GM12878 (cell line): ENCODE measurements at regions of chr5 and their contacts with region 1.

Region 1: DNA sequence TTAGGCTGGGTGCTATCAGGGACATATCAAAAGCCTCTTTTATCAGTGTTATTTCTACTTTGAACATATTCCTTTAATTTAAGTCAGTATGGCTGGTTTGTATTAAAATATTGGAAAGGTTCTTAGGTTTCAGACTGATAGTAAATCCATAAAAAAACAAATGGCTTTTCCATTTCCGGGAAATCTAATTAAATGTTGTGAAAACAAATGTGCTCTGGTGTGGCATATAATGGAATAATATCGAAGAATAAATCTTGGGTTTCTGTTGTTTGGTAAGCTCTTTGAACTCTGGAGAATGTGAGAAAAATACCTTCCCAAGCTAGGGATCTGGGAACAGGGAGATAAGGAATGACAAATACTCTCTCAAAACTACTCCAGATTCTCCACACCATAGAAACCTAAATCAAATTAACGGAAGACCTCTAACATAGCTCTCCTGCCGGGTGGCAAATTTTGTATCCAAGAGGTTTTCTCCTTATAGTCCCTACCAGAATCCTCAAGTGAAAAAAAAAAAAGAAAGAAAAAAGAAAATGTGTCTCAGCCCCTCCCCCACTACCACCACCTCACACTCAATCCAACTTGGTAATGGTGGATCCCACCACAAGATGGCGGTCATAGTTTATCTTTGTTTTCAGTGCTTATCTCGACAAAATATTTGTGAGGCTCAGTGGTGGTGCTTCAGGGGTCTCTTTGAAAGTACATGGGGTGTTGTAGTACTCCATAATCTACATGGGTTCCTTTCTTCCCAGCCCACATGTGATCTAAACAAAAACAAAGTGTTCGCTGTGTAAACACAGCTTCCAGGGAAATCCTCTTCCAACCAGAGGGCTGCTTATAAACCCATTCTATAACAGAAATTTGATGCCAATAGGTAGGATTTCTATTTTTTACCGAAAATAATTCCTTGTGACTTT is 54.6 kb upstream of the FST start:
- DNase-seq: no peak
- ATAC-seq: peak; percentile 67
- H3K4me3 ChIP-seq: no peak overlapping the region
- H3K27ac ChIP-seq: no peak overlapping the region
- H3K4me1 ChIP-seq: no peaks in the 10 kb centered on the region
- H3K27me3 ChIP-seq: 0 out of 4 replicates have a peak, but pooled peaks cover 0 to 2% of the 10 kb centered on the region in 2 experiments
- CTCF ChIP-seq: peak in 2 of 3 experiments; percentile 21 to 42; a peak in 2 of 6 replicates
- EP300 ChIP-seq: no peak
- POLR2A ChIP-seq: no peak
- RAD21 ChIP-seq: peak; percentile 55

Region 2: GRCh38 chr5:53063176-53063575 is 362.7 kb before region 1 on chr5:
- CTCF ChIA-PET with region 1: no interaction called
- POLR2A ChIA-PET with region 1: no interaction called
- RAD21 ChIA-PET with region 1: no interaction called
- SMC1A ChIA-PET with region 1: no interaction called
- in situ Hi-C with region 1: no loop called
- intact Hi-C with region 1: no loop called
- DNase-seq: no peak
- ATAC-seq: no peak
- H3K4me3 ChIP-seq: no peak overlapping the region
- H3K27ac ChIP-seq: no peak overlapping the region
- H3K4me1 ChIP-seq: no peaks in the 10 kb centered on the region
- H3K27me3 ChIP-seq: peaks cover 0 to 2% of the 10 kb centered on the region in 2 experiments; a peak in 1 of 4 replicates
- CTCF ChIP-seq: no peak
- EP300 ChIP-seq: no peak
- POLR2A ChIP-seq: no peak
- RAD21 ChIP-seq: no peak

Region 3: GRCh38 chr5:54229041-54229780 is 803.4 kb after region 1 on chr5:
- CTCF ChIA-PET with region 1: interaction called, 9 read pairs
- POLR2A ChIA-PET with region 1: no interaction called
- RAD21 ChIA-PET with region 1: interaction called, 4 read pairs
- SMC1A ChIA-PET with region 1: interaction called, 3 read pairs
- in situ Hi-C with region 1: no loop called
- intact Hi-C with region 1: loop called (anchors 2 kb)
- DNase-seq: no peak
- ATAC-seq: peak; percentile 95
- H3K4me3 ChIP-seq: no peak overlapping the region
- H3K27ac ChIP-seq: no peak overlapping the region
- H3K4me1 ChIP-seq: no peaks in the 10 kb centered on the region
- H3K27me3 ChIP-seq: no peaks in the 10 kb centered on the region
- CTCF ChIP-seq: peak; percentile 86 to 94 (median 90)
- EP300 ChIP-seq: no peak
- POLR2A ChIP-seq: no peak
- RAD21 ChIP-seq: peak; percentile 89